Heart right ventricle (tissue), 16 donors: ENCODE measurements at regions of chr18 and their contacts with region 1.

Region 1: DNA sequence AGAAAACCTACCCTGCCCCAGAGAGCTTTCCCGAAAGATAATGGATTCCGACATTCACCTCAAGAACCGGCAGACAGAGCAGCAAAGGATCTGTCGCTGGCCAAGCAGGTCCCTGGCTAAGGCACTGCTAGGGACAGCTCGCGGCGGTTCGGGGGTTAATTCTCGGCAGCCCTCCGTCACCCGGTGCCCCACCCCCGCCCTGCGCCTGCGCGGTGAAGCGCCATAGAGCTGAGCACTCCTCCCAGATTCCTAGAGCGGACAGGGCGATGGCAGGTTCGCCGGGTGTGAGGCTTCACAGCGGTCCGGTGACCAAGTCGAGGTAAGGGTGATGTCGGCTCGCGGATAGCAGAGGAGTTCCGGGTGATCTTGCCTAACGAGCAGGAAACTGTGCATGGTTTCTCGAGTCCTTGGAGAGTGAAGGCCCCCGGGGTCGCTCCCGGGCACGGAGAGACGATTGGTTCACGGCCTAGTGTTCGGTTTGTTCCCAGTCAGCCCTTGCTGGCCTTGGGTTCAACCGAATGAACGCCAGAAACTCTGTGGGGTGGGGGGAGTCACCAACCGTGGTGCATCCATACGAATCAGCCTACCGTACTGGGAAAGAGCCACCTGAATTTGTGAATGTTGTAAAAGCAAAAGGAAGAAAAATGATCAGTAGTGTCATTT is at the start of gene ZSCAN30:
- DNase-seq: peak; percentile 95 to 96
- ATAC-seq: peak; percentile 99 to 100 (median 100)
- H3K4me3 ChIP-seq: peak within 1 kb of the TSS; percentile 60 to 93 (median 79)
- H3K27ac ChIP-seq: peak within 1 kb of the TSS; percentile 43 to 93 (median 82)
- H3K4me1 ChIP-seq: peaks cover 7 to 37% (median 28%) of the 10 kb centered on the region in 9 donors
- H3K27me3 ChIP-seq: no peaks in the 10 kb centered on the region
- CTCF ChIP-seq: no peak
- total RNA-seq, gene ZSCAN30: 11.6 to 16.4 (median 14.2) TPM

Region 2: DNA sequence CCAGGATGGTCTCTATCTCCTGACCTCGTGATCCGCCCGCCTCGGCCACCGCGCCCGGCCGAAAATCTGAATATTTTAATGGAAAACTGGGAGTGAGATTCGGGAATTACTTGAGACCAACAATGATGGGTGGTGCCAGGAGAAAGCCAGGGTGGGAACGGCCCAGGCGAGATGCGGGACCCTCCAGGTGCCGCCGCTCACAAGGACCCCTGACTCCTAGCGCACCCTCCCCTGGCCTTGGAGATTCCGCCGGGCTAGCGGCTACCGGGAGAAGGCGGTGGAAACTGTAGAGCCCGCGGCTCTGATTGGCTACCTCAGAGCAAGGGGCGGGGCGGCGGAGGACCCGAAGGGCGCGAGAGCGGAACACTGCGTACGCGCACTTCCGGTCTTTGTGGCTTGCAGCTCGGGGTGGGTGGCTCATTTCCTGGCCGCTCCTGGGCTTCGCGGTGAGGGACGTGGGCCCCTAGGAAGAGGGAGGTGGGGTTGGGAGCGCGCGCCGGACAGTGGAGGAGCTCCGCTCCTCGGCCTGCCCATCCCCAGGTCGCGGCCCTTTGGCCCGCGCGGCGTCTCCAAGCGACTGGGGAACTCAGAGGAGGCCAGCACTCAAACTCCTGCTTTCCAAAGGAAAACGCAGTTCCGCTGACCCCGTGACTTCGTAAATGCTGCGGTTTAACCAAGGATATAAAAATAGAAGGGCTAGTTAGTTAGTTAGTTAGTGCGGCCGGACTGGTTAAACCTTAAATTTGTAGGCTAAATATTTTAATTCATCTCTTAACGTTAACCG is 49.3 kb before region 1 on chr18 and contains the start of gene ZNF397:
- intact Hi-C with region 1: loop called in 2 of 10 experiments (anchors 1 to 5 kb)
- DNase-seq: peak; percentile 98 to 99
- ATAC-seq: peak; percentile 100
- H3K4me3 ChIP-seq: peak within 1 kb of the TSS; percentile 54 to 92 (median 74)
- H3K27ac ChIP-seq: peak within 1 kb of the TSS; percentile 93 to 99 (median 98)
- H3K4me1 ChIP-seq: peaks cover 0 to 21% (median 13%) of the 10 kb centered on the region in 9 donors
- H3K27me3 ChIP-seq: no peaks in the 10 kb centered on the region
- CTCF ChIP-seq: peak in 2 of 9 donors; percentile 4 to 19
- total RNA-seq, gene ZNF397: 12.7 to 18.6 (median 14.6) TPM

Region 3: DNA sequence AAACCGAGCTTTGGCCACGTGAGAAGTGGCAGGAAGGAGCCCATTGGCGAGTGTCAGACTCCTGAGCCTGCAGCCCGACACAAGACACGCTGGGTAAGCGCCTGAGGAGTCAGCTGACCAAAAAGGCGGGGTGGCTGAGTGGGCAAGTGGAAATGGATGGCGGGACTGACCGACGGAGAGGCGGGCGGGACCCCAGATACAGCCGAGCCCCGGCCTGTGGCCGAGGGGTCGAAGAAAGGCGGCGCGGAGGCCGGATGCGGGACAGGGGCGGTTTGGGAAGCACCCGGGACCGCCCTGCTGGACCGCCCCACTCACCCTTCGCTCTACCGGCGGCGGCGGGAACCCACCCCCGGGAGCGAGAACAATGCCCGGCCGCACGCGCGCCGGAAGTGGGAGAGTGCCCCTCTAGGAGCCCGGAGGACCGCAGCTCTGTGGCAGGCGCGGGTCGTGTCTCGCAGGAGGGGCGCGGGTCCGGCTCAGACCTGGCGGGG is 23.0 kb before region 1 on chr18:
- intact Hi-C with region 1: loop called in 1 of 10 experiments (anchors 1 kb)
- DNase-seq: peak; percentile 85
- ATAC-seq: peak; percentile 95 to 98 (median 98)
- H3K4me3 ChIP-seq: peak overlapping the region; percentile 38 to 88 (median 73)
- H3K27ac ChIP-seq: peak overlapping the region; percentile 21 to 93 (median 87)
- H3K4me1 ChIP-seq: peaks cover 0 to 12% (median 5%) of the 10 kb centered on the region in 9 donors
- H3K27me3 ChIP-seq: no peaks in the 10 kb centered on the region
- CTCF ChIP-seq: peak in 3 of 9 donors; percentile 6 to 31 (median 15)

Region 4: DNA sequence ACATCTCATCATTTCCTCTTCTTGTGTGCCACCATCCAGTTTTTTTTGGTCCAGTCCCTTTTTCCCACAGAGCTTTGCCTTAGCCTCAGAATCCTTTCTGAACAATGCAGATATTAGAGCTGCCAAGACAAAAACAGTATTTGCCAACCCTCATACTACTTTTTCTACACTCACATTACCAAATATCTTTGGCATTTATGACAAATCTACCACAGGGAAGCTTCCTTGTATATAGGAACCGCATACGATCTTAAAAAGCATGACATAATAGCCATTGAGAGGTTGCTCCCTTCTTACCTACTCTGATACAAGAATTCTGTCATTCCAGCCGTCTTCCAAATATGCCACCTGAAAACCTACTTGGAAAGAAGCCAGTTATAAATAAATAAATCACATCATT is 44.6 kb after region 1 on chr18:
- intact Hi-C with region 1: loop called in 7 of 10 experiments (anchors 5 to 10 kb)
- DNase-seq: no peak
- ATAC-seq: no peak
- H3K4me3 ChIP-seq: no peak overlapping the region
- H3K27ac ChIP-seq: no peak overlapping the region
- H3K4me1 ChIP-seq: peaks cover 0 to 41% (median 3%) of the 10 kb centered on the region in 9 donors
- H3K27me3 ChIP-seq: no peaks in the 10 kb centered on the region
- CTCF ChIP-seq: no peak

Region 5: DNA sequence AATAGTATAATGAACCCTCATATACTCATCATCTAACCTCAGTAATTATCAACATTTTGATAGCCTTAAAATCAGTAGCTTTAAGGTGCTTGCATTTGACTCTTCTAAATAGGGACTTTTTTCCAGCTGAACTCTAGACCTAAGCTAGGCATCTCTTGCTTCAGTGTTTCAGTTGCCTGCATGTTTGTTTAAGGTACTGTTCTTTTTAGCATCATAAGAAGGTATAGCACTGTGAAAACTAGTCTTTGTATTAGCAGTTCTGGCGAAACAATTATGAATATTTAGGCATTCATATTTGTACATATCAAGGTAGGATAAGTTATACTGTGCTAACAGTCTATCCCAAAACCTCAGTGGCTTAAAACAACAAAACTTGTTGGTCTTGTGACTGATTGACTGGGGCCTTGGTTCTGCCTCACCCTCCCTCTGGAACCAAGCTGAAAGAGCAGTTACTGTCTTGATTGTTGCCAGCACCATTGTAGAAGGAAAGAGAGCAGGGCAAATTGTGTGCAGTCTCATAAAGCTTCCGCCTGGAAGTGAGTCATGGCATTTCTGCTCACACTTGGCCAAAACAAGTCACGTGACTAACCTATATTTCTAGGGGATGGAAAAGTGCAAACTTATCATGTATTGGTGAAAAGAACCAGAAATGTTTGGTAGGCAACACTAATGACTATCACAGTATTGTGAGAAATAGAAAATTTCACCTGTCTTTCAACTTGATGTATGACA is 315.6 kb after region 1 on chr18:
- intact Hi-C with region 1: no loop called
- DNase-seq: no peak
- ATAC-seq: no peak
- H3K4me3 ChIP-seq: no peak overlapping the region
- H3K27ac ChIP-seq: no peak overlapping the region
- H3K4me1 ChIP-seq: peaks cover 0 to 30% (median 19%) of the 10 kb centered on the region in 9 donors
- H3K27me3 ChIP-seq: no peaks in the 10 kb centered on the region
- CTCF ChIP-seq: no peak